ENCODE measurements at regions of chr5 and their contacts with region 1.

Region 1: DNA sequence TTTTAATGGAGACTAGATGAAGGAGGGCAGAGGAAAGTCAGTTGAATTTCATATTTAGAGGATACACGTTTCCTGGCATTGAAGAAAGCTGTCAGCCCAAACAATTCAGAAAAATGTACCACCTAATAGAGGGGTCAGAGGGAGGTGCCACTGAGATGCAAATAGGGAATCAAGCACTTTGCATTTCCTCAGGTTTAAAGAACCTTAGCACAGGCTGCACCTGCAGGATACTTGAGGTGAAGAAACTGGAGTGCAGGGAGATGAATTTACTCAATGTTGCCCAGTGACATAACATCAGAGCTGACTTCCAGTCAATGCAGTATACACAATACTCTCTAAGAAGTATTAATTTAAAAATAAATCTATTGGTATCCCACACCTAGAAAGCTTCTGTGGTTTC is 67.0 kb upstream of the MAST4 start:
- DNase-seq: no peak
- ATAC-seq: no peak
- H3K4me3 ChIP-seq: no peak overlapping the region
- H3K27ac ChIP-seq: no peak overlapping the region
- H3K4me1 ChIP-seq: no peaks in the 10 kb centered on the region
- H3K27me3 ChIP-seq: no peaks in the 10 kb centered on the region
- CTCF ChIP-seq: no peak

Region 2: DNA sequence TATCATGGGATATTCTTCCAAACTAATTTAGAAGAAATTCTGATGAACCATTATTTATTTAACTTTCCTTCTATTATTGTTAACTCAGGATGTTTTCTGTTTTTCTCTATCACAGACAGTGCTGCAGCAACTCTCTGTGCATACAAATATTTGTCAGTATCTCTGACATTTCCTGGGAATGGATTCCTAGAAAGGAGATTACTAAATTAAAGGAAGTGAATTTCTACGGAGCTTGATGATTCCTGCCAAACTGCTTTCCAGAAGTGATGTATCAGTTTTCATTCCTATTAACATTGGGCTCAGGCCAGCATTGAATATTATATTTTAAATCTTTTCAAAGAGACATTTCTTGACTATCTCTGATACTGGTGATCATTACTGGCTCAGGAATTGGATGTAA is 41.0 kb after region 1 on chr5:
- intact Hi-C with region 1: loop called in 1 of 10 experiments (anchors 10 kb)
- DNase-seq: no peak
- ATAC-seq: no peak
- H3K4me3 ChIP-seq: no peak overlapping the region
- H3K27ac ChIP-seq: no peak overlapping the region
- H3K4me1 ChIP-seq: peaks cover 0 to 16% (median 0%) of the 10 kb centered on the region in 9 donors
- H3K27me3 ChIP-seq: no peaks in the 10 kb centered on the region
- CTCF ChIP-seq: no peak

Region 3: GRCh38 chr5:66597183-66597761 is 68.1 kb after region 1 on chr5:
- intact Hi-C with region 1: no loop called
- DNase-seq: peak; percentile 51 to 67
- ATAC-seq: peak; percentile 18 to 75 (median 60)
- H3K4me3 ChIP-seq: peak overlapping the region; percentile 63 to 90 (median 75)
- H3K27ac ChIP-seq: peak overlapping the region; percentile 44 to 83 (median 80)
- H3K4me1 ChIP-seq: peaks cover 0 to 62% (median 20%) of the 10 kb centered on the region in 9 donors
- H3K27me3 ChIP-seq: peaks cover 0 to 76% (median 0%) of the 10 kb centered on the region in 7 donors
- CTCF ChIP-seq: peak in 4 of 9 donors; percentile 5 to 40 (median 26)

Region 4: GRCh38 chr5:66701244-66701643 is 172.1 kb after region 1 on chr5:
- intact Hi-C with region 1: no loop called
- DNase-seq: no peak
- ATAC-seq: no peak
- H3K4me3 ChIP-seq: no peak overlapping the region
- H3K27ac ChIP-seq: no peak overlapping the region
- H3K4me1 ChIP-seq: peaks cover 0 to 26% (median 8%) of the 10 kb centered on the region in 9 donors
- H3K27me3 ChIP-seq: no peaks in the 10 kb centered on the region
- CTCF ChIP-seq: no peak

Region 5: GRCh38 chr5:66757188-66757833 is 228.1 kb after region 1 on chr5:
- intact Hi-C with region 1: no loop called
- DNase-seq: peak in 1 of 2 donors; percentile 54
- ATAC-seq: peak in 6 of 8 donors; percentile 44 to 79 (median 73)
- H3K4me3 ChIP-seq: no peak overlapping the region
- H3K27ac ChIP-seq: no peak overlapping the region
- H3K4me1 ChIP-seq: peaks cover 0 to 24% (median 10%) of the 10 kb centered on the region in 9 donors
- H3K27me3 ChIP-seq: no peaks in the 10 kb centered on the region
- CTCF ChIP-seq: peak in 8 of 9 donors; percentile 26 to 70 (median 59)